Right cardiac atrium (tissue), 5 donors: ENCODE measurements at regions of chr12 and their contacts with region 1.

Region 1: GRCh38 chr12:9925708-9926393 is 6.3 kb downstream of the CLEC2A start:
- DNase-seq: no peak
- ATAC-seq: peak; percentile 48 to 52
- H3K4me3 ChIP-seq: peak overlapping the region; percentile 22
- H3K27ac ChIP-seq: no peak overlapping the region
- H3K4me1 ChIP-seq: no peaks in the 10 kb centered on the region
- H3K27me3 ChIP-seq: no peaks in the 10 kb centered on the region

Region 2: GRCh38 chr12:9741726-9742125 is 184.1 kb before region 1 on chr12:
- intact Hi-C with region 1: loop called in 2 of 4 experiments (anchors 5 to 10 kb)
- DNase-seq: no peak
- ATAC-seq: no peak
- H3K4me3 ChIP-seq: no peak overlapping the region
- H3K27ac ChIP-seq: no peak overlapping the region
- H3K4me1 ChIP-seq: peaks cover 3% of the 10 kb centered on the region
- H3K27me3 ChIP-seq: no peaks in the 10 kb centered on the region

Region 3: GRCh38 chr12:9750276-9751203 is 175.3 kb before region 1 on chr12:
- intact Hi-C with region 1: loop called in 3 of 4 experiments (anchors 5 to 10 kb)
- DNase-seq: peak; percentile 27 to 61 (median 54)
- ATAC-seq: peak; percentile 84 to 90
- H3K4me3 ChIP-seq: no peak overlapping the region
- H3K27ac ChIP-seq: no peak overlapping the region
- H3K4me1 ChIP-seq: no peaks in the 10 kb centered on the region
- H3K27me3 ChIP-seq: no peaks in the 10 kb centered on the region

Region 4: DNA sequence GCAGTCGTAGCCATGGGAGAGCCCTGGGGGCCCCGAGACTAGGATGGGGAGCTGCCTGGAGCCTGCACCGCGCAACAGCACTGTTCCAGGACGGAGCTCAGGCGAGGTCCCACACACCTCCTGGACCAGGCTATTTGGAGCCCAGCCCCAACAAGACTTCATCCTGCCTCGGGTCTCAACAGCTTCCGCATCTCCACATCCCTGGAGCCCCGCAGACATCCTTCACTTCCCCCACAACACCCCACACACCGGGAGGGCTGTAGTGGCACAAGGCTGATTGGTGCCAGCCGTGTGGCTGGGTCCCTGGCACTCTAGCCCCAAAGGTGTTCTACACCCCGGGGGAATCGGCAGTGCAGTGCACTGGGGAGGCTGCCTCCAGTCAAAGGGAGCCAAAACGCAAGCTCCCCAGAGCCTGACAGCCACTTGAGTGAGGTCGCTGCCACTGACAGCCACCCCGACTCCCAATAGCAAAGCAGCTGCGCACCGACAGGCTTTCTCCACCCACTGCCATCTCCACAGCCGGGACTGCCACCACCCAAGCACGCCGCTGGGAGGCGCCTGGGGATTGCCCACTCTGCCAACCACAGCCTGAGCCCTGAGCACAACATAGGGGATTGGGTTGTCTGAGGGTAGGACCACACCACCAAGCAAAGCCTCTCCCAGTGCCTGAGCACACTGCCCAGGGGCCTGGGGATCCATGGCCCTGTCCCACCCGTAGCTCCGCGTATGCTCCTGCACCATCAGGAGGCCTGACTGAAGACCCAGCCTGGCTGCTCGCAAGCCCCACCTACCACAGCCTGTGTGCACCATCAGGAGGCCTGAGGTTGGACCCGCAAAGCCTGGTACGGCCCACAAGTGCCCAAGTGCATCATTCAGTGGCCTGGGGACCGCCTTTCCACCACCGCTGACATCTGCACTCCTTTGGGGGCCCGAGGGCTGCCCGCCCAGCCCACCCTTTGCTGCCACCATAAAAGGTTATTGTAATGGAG is 111.7 kb before region 1 on chr12:
- intact Hi-C with region 1: loop called in 3 of 4 experiments (anchors 5 to 10 kb)
- DNase-seq: peak; percentile 71 to 90 (median 89)
- ATAC-seq: peak; percentile 96 to 97
- H3K4me3 ChIP-seq: no peak overlapping the region
- H3K27ac ChIP-seq: no peak overlapping the region
- H3K4me1 ChIP-seq: no peaks in the 10 kb centered on the region
- H3K27me3 ChIP-seq: no peaks in the 10 kb centered on the region

Region 5: GRCh38 chr12:9872742-9873141 is 53.1 kb before region 1 on chr12:
- intact Hi-C with region 1: no loop called
- DNase-seq: peak in 2 of 3 donors; percentile 46 to 66
- ATAC-seq: peak; percentile 40 to 74
- H3K4me3 ChIP-seq: no peak overlapping the region
- H3K27ac ChIP-seq: no peak overlapping the region
- H3K4me1 ChIP-seq: no peaks in the 10 kb centered on the region
- H3K27me3 ChIP-seq: no peaks in the 10 kb centered on the region